ENCODE measurements at regions of chr14 and their contacts with region 1.

Region 1: DNA sequence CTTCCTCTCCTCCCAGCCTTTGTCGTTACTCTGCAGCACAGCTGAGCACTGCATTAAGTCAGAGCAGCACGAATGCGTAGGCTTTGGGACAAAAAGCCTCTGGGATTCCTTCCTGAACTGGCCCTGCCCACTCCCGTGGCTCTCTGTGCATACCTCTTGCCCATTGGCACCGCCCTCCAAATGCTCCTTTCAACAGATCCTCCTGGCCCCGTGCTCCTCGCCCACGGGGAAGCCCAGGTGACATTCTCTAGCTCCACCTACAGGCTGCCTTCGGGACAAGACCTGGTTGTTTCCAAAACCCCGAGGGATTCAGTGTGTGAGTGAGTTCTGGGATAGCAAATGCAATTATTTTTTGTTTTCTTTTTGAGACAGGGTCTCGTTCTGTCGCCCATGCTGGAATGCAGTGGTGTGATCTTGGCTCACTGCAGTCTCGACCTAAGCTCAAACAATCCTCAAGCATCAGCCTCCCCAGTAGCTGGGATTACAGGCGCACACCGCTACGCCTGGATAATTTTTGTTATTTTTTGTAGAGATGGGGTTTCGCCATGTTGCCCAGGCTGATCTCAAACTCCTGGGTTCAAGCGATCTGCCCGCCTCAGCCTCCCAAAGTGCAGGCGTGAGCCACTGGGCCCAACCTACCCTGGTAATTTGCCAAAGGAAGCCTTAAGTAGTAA is 17.9 kb upstream of the TDRD9 start:
- DNase-seq: peak; percentile 43 to 74 (median 71)
- ATAC-seq: peak; percentile 86
- H3K4me3 ChIP-seq: peak overlapping the region; percentile 40
- H3K4me3 Mint-ChIP-seq: peak overlapping the region; percentile 70 to 88 (median 78)
- H3K27ac ChIP-seq: peak overlapping the region; percentile 59
- H3K27ac Mint-ChIP-seq: peak overlapping the region; percentile 73 to 96 (median 84)
- H3K4me1 ChIP-seq: peaks cover 13 to 23% of the 10 kb centered on the region in 2 donors
- H3K4me1 Mint-ChIP-seq: peaks cover 7 to 34% (median 28%) of the 10 kb centered on the region in 7 donors
- H3K27me3 ChIP-seq: no peaks in the 10 kb centered on the region
- H3K27me3 Mint-ChIP-seq: no peaks in the 10 kb centered on the region

Region 2: DNA sequence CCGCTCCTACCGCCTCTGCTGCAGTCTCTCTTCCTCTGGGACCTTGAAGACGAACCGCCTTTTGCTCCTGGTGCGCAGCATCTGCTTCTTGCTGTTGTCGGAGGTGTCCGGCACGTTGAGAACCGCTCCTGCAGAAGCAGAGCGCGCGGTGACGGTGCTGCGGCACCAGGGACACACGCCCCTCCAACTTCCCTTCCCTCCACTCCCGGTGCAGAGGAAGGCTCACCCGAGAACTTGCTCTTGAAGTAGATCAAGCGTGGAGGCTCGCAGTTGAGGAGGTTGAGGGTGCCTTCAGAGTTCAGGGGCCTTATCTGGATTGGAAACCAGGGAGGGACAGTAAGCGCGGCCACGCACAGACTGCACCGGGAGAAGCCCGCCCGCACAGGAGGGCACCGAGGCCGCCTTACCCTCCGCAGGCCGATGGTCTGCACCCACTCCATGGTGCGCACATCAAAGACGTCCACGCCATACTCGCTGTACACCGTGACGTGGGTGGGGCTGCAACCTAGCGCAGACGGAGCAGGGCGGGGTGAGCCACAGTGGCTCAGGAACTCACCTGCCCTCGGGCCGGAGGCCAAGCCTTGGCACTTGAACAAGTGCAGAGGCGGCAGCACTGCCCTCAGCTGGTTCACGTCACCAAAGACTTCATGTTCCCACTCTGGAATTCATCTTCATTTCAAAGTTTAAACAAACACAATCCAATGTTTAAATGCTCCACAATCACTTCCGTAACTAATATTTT is 970.4 kb before region 1 on chr14:
- CTCF ChIA-PET with region 1: no interaction called
- POLR2A ChIA-PET with region 1: no interaction called
- intact Hi-C with region 1: no loop called
- DNase-seq: no peak
- ATAC-seq: no peak
- H3K4me3 ChIP-seq: no peak overlapping the region
- H3K4me3 Mint-ChIP-seq: no peak overlapping the region
- H3K27ac ChIP-seq: no peak overlapping the region
- H3K27ac Mint-ChIP-seq: peak overlapping the region in 1 of 9 donors; percentile 74
- H3K4me1 ChIP-seq: no peaks in the 10 kb centered on the region
- H3K4me1 Mint-ChIP-seq: peaks cover 0 to 3% (median 0%) of the 10 kb centered on the region in 7 donors
- H3K27me3 ChIP-seq: no peaks in the 10 kb centered on the region
- H3K27me3 Mint-ChIP-seq: no peaks in the 10 kb centered on the region

Region 3: DNA sequence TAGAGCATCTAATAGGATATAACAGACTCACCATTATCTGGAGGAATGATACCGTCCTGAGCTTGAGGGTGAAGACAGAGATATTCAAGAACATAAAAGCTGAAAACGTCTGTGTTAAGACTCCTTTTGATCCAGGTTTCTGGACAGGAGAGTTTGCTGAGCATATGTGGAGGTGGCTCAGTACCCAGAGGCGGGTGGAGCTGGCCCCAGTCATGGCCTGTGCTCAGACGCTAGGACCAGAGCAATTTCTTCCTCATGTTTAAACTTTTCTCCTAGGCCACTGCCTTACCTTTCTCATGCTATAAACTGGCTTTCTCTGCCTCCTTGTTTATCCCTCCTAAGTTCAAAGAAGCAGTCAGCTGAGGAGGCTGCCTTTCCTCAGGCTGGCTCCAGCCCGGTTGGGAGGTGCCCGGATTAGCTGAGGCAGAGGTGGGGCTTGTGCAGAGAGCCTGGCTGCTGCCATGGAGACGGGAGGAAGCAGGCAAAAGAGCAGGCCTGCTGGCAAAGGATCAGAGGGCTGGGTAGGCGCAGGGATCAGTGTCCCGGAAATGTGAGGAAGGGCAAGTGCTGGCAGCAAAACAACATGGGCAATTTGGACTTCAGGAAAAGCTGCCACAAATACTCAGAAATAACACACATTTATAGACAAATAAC is 333.9 kb before region 1 on chr14:
- CTCF ChIA-PET with region 1: no interaction called
- POLR2A ChIA-PET with region 1: no interaction called
- intact Hi-C with region 1: loop called (anchors 2 kb)
- DNase-seq: no peak
- ATAC-seq: no peak
- H3K4me3 ChIP-seq: no peak overlapping the region
- H3K4me3 Mint-ChIP-seq: no peak overlapping the region
- H3K27ac ChIP-seq: no peak overlapping the region
- H3K27ac Mint-ChIP-seq: no peak overlapping the region
- H3K4me1 ChIP-seq: no peaks in the 10 kb centered on the region
- H3K4me1 Mint-ChIP-seq: peaks cover 0 to 2% (median 0%) of the 10 kb centered on the region in 7 donors
- H3K27me3 ChIP-seq: no peaks in the 10 kb centered on the region
- H3K27me3 Mint-ChIP-seq: no peaks in the 10 kb centered on the region

Region 4: GRCh38 chr14:103696466-103697071 is 213.8 kb before region 1 on chr14:
- CTCF ChIA-PET with region 1: no interaction called
- POLR2A ChIA-PET with region 1: no interaction called
- intact Hi-C with region 1: no loop called
- DNase-seq: no peak
- ATAC-seq: no peak
- H3K4me3 ChIP-seq: no peak overlapping the region
- H3K4me3 Mint-ChIP-seq: no peak overlapping the region
- H3K27ac ChIP-seq: no peak overlapping the region
- H3K27ac Mint-ChIP-seq: peak overlapping the region in 4 of 9 donors; percentile 22 to 66 (median 62)
- H3K4me1 ChIP-seq: no peaks in the 10 kb centered on the region
- H3K4me1 Mint-ChIP-seq: peaks cover 0 to 11% (median 4%) of the 10 kb centered on the region in 7 donors
- H3K27me3 ChIP-seq: no peaks in the 10 kb centered on the region
- H3K27me3 Mint-ChIP-seq: no peaks in the 10 kb centered on the region

Region 5: DNA sequence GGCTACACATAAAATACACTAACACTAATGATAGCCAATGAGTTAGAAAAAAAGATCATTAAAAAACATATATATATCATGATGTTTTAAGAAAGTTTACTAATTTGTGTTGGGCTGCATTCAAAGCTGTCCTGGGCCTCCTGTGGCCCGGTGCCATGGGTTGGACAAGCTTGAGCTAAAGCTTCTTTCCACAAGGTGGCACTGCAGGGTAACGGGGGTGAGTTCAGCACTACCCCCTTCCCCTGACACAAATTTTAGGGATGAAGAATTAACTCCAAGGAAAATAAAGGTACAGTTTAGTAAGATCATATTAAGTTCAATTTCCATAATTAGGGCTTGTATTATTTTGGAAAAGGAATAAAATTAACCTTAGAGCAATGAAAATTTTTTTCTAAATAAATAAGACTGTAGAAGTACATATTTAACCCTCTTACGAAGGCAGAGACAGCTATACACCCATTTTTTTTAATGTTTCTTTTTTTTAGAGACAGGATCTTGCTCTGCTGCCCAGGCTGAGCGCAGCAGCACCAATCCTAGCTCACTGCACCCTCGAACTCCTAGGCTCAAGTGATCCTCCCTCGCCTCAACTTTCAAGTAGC is 101.9 kb before region 1 on chr14:
- CTCF ChIA-PET with region 1: interaction called, 90 read pairs
- POLR2A ChIA-PET with region 1: interaction called, 7 read pairs
- intact Hi-C with region 1: loop called (anchors 1 kb)
- DNase-seq: peak; percentile 20 to 71 (median 63)
- ATAC-seq: peak; percentile 82
- H3K4me3 ChIP-seq: no peak overlapping the region
- H3K4me3 Mint-ChIP-seq: no peak overlapping the region
- H3K27ac ChIP-seq: no peak overlapping the region
- H3K27ac Mint-ChIP-seq: no peak overlapping the region
- H3K4me1 ChIP-seq: no peaks in the 10 kb centered on the region
- H3K4me1 Mint-ChIP-seq: peaks cover 3 to 18% (median 6%) of the 10 kb centered on the region in 7 donors
- H3K27me3 ChIP-seq: no peaks in the 10 kb centered on the region
- H3K27me3 Mint-ChIP-seq: no peaks in the 10 kb centered on the region

Region 6: DNA sequence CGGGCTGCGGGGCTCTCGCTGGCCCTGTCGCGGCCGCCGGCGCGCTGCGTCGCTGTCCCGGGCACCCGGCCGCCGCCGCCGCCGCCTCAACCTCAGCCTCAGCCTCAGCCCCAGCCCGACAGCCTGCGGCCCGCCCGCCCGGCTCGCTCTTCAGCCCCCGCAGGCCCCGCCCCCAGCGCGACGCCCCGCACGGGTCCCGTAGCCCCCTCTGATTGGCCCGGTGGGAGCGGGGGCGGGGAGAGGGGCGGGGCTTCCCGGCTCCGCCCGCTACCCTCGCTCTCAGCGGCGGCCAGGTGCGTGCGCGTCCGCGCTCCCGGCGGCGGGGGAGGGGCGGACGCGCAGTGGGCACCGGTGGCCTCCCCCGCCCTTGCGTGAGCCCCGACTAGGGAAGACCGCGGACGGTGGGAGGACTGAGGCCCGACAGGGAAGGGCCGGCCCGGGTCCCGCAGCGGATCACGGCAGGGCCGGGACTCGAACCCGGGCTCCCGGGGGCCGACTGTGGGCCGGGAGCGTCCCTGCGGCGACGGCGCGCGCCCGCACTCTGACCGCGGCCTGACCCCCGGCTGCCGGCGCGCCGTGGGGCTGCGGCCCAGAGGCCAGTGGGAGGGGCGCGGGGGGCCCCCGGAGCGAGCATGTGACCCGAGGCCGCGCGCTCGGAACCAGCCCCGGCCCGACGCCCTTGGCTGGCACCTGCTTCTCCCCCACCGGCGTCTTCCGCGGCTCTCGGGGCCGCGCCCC is 62.8 kb before region 1 on chr14 and contains the start of gene PPP1R13B:
- CTCF ChIA-PET with region 1: no interaction called
- POLR2A ChIA-PET with region 1: no interaction called
- intact Hi-C with region 1: loop called in 1 of 2 experiments (anchors 10 kb)
- DNase-seq: peak; percentile 85 to 97 (median 91)
- ATAC-seq: peak; percentile 99
- H3K4me3 ChIP-seq: peak within 1 kb of the TSS; percentile 51
- H3K4me3 Mint-ChIP-seq: peak within 1 kb of the TSS; percentile 78 to 94 (median 89)
- H3K27ac ChIP-seq: peak within 1 kb of the TSS; percentile 67
- H3K27ac Mint-ChIP-seq: peak within 1 kb of the TSS; percentile 60 to 92 (median 79)
- H3K4me1 ChIP-seq: no peaks in the 10 kb centered on the region
- H3K4me1 Mint-ChIP-seq: peaks cover 11 to 24% (median 17%) of the 10 kb centered on the region in 7 donors
- H3K27me3 ChIP-seq: no peaks in the 10 kb centered on the region
- H3K27me3 Mint-ChIP-seq: peaks cover 0 to 36% (median 0%) of the 10 kb centered on the region in 5 donors
- total RNA-seq, gene PPP1R13B: 10.8 to 26.8 (median 17.7) TPM

Region 7: DNA sequence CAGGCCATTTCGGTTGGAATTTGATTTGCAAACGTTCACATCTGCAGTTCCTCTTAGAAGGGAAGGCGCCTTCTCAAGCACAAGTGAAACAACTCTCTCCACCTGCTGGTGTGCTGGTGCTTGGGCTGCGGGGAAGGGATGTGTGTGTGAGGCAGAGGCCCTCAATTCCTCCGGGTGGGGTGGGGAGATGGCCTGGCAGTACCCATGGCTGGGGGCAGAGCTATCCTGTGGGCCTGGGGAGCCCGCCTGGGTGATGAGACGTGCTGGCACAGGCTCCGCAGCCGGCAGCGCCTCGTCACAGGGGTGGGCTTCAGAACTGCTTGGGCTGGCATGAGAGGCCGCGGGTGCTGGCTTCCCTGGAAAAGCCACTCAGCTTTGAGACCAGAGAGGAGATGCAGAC is 11.1 kb before region 1 on chr14:
- CTCF ChIA-PET with region 1: interaction called, 21 read pairs
- POLR2A ChIA-PET with region 1: no interaction called
- intact Hi-C with region 1: no loop called
- DNase-seq: no peak
- ATAC-seq: no peak
- H3K4me3 ChIP-seq: no peak overlapping the region
- H3K4me3 Mint-ChIP-seq: no peak overlapping the region
- H3K27ac ChIP-seq: no peak overlapping the region
- H3K27ac Mint-ChIP-seq: no peak overlapping the region
- H3K4me1 ChIP-seq: peaks cover 0 to 5% of the 10 kb centered on the region in 2 donors
- H3K4me1 Mint-ChIP-seq: peaks cover 0 to 7% (median 6%) of the 10 kb centered on the region in 7 donors
- H3K27me3 ChIP-seq: no peaks in the 10 kb centered on the region
- H3K27me3 Mint-ChIP-seq: peaks cover 0 to 1% (median 0%) of the 10 kb centered on the region in 5 donors

Region 8: GRCh38 chr14:103931422-103931821 is 21.0 kb after region 1 on chr14:
- CTCF ChIA-PET with region 1: no interaction called
- POLR2A ChIA-PET with region 1: interaction called, 4 read pairs
- intact Hi-C with region 1: loop called in 1 of 2 experiments (anchors 1 kb)
- DNase-seq: no peak
- ATAC-seq: peak; percentile 71
- H3K4me3 ChIP-seq: no peak overlapping the region
- H3K4me3 Mint-ChIP-seq: no peak overlapping the region
- H3K27ac ChIP-seq: no peak overlapping the region
- H3K27ac Mint-ChIP-seq: no peak overlapping the region
- H3K4me1 ChIP-seq: no peaks in the 10 kb centered on the region
- H3K4me1 Mint-ChIP-seq: peaks cover 0 to 10% (median 0%) of the 10 kb centered on the region in 7 donors
- H3K27me3 ChIP-seq: no peaks in the 10 kb centered on the region
- H3K27me3 Mint-ChIP-seq: peaks cover 0 to 7% (median 0%) of the 10 kb centered on the region in 5 donors

Region 9: DNA sequence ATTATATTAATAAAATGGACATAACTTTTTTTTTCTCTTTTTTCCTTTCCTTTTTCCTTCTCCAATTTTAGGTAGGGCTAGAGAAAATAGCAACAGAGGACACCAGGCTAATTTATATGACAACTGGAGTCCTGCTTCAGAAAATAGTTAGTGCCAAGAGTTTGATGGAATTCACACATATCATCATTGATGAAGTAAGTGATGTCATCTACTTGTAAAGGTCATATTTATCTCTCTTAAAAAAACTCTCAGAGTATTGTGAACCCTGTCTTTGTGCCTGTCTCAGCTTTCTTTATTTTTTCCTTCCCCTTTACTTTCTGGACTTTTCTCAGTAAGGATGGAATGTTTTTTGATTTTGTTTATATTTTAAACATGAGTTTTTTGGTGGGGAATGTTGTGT is 56.2 kb after region 1 on chr14:
- CTCF ChIA-PET with region 1: no interaction called
- POLR2A ChIA-PET with region 1: no interaction called
- intact Hi-C with region 1: no loop called
- DNase-seq: no peak
- ATAC-seq: no peak
- H3K4me3 ChIP-seq: no peak overlapping the region
- H3K4me3 Mint-ChIP-seq: no peak overlapping the region
- H3K27ac ChIP-seq: no peak overlapping the region
- H3K27ac Mint-ChIP-seq: no peak overlapping the region
- H3K4me1 ChIP-seq: no peaks in the 10 kb centered on the region
- H3K4me1 Mint-ChIP-seq: no peaks in the 10 kb centered on the region
- H3K27me3 ChIP-seq: no peaks in the 10 kb centered on the region
- H3K27me3 Mint-ChIP-seq: peaks cover 6 to 19% (median 8%) of the 10 kb centered on the region in 5 donors